IMR-90 (cell line): ENCODE measurements at regions of chr1 and their contacts with region 1.

Region 1: DNA sequence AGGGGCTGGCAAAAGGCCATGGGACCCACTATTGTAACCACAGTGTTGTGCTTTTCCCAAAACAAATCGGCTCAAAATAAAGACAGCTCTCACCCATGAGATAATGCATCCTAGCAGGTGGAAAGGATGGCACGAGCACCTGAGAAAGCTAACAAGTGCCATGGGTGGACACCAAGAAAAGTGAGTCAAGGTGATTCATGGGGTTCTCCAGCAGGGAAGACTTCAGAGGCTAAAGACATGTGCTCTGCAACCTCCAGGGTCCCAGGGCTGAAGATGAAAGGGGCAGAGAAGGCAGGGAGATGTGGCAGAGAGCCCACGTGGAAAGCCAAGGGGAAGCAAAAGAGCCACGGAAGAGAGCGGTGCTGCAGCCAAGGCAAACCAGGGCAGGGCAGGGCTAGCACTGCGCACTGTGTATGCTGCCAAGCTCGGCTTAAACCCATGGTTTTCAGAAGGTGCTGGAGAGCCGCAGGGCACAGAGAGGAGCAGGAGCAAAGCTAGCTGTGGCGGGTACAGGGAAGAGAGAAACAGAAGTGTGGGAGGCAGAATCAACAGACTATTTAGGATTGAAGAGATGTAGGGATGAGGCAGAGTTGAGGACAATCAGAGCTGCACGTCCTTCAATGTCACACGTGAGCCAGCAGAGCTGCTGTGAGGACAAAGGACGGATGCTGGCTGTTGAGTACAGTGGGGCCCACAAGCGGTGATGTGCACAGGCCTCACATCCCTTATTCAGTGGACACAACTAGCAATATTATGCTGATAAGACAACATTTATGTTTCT is 41.8 kb upstream of the C1orf198 start:
- DNase-seq: no peak
- ATAC-seq: no peak
- H3K4me3 ChIP-seq: no peak overlapping the region
- H3K27ac ChIP-seq: no peak overlapping the region
- H3K4me1 ChIP-seq: peaks cover 7% of the 10 kb centered on the region
- H3K27me3 ChIP-seq: no peaks in the 10 kb centered on the region
- CTCF ChIP-seq: no peak
- POLR2A ChIP-seq: no peak
- RAD21 ChIP-seq: no peak

Region 2: DNA sequence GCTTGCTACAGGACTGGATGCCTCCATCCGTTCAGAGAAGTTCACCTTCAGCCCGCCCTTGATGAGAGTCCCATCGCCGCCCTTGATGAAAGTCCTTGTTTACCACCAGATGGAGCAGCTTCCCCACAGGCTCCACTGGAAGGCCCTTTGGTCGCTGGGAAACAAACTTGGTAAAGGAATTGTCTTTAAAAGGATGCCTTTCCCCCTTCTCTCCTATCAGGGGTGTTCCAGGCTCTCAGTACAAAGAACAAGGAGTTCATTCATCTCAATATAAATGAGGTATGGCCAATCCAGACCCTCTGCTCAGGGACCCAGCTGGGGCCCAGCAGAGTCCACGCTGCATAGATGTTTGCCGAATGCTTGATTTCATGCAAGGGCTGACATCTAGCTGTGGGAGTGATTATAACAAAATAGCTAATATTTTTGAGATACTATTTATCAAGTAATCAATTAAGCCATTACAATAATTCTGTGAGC is 112.2 kb before region 1 on chr1:
- CTCF ChIA-PET with region 1: interaction called, 3 read pairs
- POLR2A ChIA-PET with region 1: no interaction called
- dilution Hi-C with region 1: no loop called
- in situ Hi-C with region 1: loop called (anchors 5 kb)
- intact Hi-C with region 1: no loop called
- DNase-seq: peak; percentile 73
- ATAC-seq: peak; percentile 93
- H3K4me3 ChIP-seq: no peak overlapping the region
- H3K27ac ChIP-seq: no peak overlapping the region
- H3K4me1 ChIP-seq: no peaks in the 10 kb centered on the region
- H3K27me3 ChIP-seq: no peaks in the 10 kb centered on the region
- CTCF ChIP-seq: peak; percentile 89
- POLR2A ChIP-seq: no peak
- RAD21 ChIP-seq: peak; percentile 97

Region 3: DNA sequence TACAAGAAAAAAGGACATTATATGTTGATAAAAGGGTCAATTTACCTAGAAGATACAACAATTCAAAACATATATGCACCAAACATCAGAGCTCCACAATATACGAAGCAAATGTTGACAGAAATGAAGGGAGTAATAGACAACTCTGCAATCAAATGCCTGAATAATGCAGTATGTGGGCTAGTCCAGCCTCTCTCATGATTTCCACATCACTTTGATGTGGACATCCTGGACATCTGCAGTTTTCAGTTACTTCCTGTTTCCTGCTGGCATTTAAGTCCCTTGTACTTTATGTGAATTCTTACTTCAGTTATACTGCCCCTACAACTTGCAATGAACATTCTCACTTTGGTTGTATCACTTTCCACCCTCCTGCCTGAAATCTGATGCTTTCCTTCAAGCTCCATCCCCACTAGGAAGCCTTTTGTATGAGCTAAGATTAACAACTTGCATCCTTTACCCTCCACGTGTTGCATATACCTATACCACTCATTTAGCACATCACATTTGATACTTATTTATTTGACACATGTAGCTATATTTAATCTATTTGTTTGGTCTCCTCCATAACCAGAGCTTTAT is 753.1 kb after region 1 on chr1:
- CTCF ChIA-PET with region 1: no interaction called
- POLR2A ChIA-PET with region 1: no interaction called
- dilution Hi-C with region 1: no loop called
- in situ Hi-C with region 1: no loop called
- intact Hi-C with region 1: no loop called
- DNase-seq: peak; percentile 46
- ATAC-seq: no peak
- H3K4me3 ChIP-seq: no peak overlapping the region
- H3K27ac ChIP-seq: no peak overlapping the region
- H3K4me1 ChIP-seq: peaks cover 3% of the 10 kb centered on the region
- H3K27me3 ChIP-seq: no peaks in the 10 kb centered on the region
- CTCF ChIP-seq: no peak
- POLR2A ChIP-seq: no peak
- RAD21 ChIP-seq: no peak